T-cell (primary cell): ENCODE measurements at regions of chr1 and their contacts with region 1.

Region 1: GRCh38 chr1:151309811-151310323 is 17.3 kb downstream of the PI4KB start:
- DNase-seq: no peak
- ATAC-seq: no peak
- H3K4me3 ChIP-seq: no peak overlapping the region
- H3K4me3 Mint-ChIP-seq: no peak overlapping the region
- H3K27ac ChIP-seq: no peak overlapping the region
- H3K27ac Mint-ChIP-seq: peak overlapping the region in 1 of 2 donors; percentile 74
- H3K4me1 ChIP-seq: peaks cover 0 to 18% of the 10 kb centered on the region in 2 experiments
- H3K4me1 Mint-ChIP-seq: peaks cover 30 to 45% (median 42%) of the 10 kb centered on the region in 3 donors
- H3K27me3 ChIP-seq: no peaks in the 10 kb centered on the region
- H3K27me3 Mint-ChIP-seq: no peaks in the 10 kb centered on the region

Region 2: DNA sequence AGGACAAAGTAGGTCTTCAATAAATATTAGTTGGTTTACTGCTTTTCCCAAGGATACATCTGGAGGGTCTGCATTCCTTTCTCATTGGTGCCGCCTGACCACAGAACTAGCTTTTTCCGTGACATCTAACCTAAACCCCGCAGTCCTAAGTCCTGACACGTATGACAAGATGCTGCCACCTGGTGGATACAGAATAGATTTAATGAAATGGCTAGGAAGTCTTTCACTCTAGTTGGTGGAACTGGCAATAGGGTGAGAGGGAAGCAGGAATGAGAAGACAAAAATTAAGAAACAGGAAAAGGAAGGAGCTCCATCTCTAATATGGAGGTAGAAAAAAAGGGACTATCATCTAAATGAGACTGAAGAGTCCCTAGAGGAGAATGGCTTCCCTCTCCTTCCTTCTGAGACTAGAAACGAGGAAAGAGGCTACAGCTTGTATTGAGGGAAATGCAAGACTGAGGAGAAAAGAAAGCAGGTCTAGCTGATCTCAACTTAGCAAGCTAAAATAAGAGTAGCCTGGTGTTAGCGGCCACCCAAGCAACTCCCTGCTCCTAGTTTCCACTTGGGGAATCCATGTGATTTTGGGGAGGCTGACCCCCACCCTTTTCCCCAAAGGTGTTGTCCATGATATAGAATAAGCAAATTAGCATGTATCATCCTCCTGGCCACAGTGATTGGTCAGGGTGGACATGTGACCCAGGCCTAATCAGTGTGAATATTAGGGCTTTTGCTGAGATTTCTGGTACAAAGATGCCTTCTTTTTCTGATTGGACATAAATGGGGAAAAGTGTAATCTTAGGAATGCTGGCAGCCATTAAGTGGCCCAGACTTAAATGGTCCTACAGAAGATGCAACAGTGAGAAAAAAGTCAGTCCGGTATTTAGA is 31.2 kb after region 1 on chr1:
- CTCF ChIA-PET with region 1: interaction called in 1 of 2 experiments, 10 read pairs
- POLR2A ChIA-PET with region 1: interaction called in 1 of 2 experiments, 3 read pairs
- DNase-seq: peak in 28 of 35 experiments; percentile 14 to 83 (median 32)
- ATAC-seq: peak; percentile 84 to 87 (median 86)
- H3K4me3 ChIP-seq: no peak overlapping the region
- H3K4me3 Mint-ChIP-seq: no peak overlapping the region
- H3K27ac ChIP-seq: peak overlapping the region; percentile 35
- H3K27ac Mint-ChIP-seq: peak overlapping the region; percentile 7 to 70
- H3K4me1 ChIP-seq: peaks cover 3 to 12% of the 10 kb centered on the region in 2 experiments
- H3K4me1 Mint-ChIP-seq: peaks cover 13 to 39% (median 24%) of the 10 kb centered on the region in 3 donors
- H3K27me3 ChIP-seq: no peaks in the 10 kb centered on the region
- H3K27me3 Mint-ChIP-seq: no peaks in the 10 kb centered on the region